ENCODE measurements at regions of chr9 and their contacts with region 1.

Region 1: DNA sequence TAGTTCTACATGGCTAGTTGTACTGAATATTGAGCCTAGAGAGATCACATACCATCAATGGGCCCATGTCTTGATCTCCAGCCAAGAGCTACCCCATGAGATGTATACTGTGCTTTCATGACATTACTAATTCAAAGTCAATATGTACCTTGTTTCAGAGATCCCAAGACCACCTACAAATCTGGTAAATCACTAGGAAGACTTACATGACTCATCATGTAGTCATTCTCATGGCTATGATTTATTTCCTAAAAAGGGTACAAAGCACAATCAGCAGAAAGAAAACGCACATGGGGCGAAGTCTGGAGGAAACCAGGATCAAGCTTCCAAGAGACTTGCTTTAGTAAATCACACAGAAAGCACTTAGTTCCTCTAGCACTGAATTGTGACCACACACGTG is 103.0 kb downstream of the PCSK5 start:
- DNase-seq: no peak
- H3K4me3 ChIP-seq: no peak overlapping the region
- H3K27ac ChIP-seq: no peak overlapping the region
- H3K4me1 ChIP-seq: peaks cover 0 to 7% of the 10 kb centered on the region in 2 donors
- H3K27me3 ChIP-seq: no peaks in the 10 kb centered on the region
- CTCF ChIP-seq: no peak
- POLR2A ChIP-seq: no peak

Region 2: GRCh38 chr9:75890472-75891276 is 102.8 kb before region 1 on chr9 and contains the start of gene PCSK5:
- intact Hi-C with region 1: loop called in 1 of 2 experiments (anchors 10 kb)
- DNase-seq: peak; percentile 93 to 97 (median 94)
- H3K4me3 ChIP-seq: peak within 1 kb of the TSS; percentile 12 to 81 (median 54)
- H3K27ac ChIP-seq: peak within 1 kb of the TSS; percentile 70 to 92 (median 81)
- H3K4me1 ChIP-seq: peaks cover 8 to 19% of the 10 kb centered on the region in 2 donors
- H3K27me3 ChIP-seq: no peaks in the 10 kb centered on the region
- CTCF ChIP-seq: peak in 4 of 6 experiments; percentile 22 to 34 (median 30)
- POLR2A ChIP-seq: peak; percentile 85 to 92
- total RNA-seq, gene PCSK5: 4.8 to 31.8 (median 9.2) TPM

Region 3: GRCh38 chr9:75921391-75922127 is 71.9 kb before region 1 on chr9:
- intact Hi-C with region 1: loop called in 1 of 2 experiments (anchors 10 kb)
- DNase-seq: no peak
- H3K4me3 ChIP-seq: no peak overlapping the region
- H3K27ac ChIP-seq: no peak overlapping the region
- H3K4me1 ChIP-seq: no peaks in the 10 kb centered on the region
- H3K27me3 ChIP-seq: no peaks in the 10 kb centered on the region
- CTCF ChIP-seq: no peak
- POLR2A ChIP-seq: no peak

Region 4: DNA sequence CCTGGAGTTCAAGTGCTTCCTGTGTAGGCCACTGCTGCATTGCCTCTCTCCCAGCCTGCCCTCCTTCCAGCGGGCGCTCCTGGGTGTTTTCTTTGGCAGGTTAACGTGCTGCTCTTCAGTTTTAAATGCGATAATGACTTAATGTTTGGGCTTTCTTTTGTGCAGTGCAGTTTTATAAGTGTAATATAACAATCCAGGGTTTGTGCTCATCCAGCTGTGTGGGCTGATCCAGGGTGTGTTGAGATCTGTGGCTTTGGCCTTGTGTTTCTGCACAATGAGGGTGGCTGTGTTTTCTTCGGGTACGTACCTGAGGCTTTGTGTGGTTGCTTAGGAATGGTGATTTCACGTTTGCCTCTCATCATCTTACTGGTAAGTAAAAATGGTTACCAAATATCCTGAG is 52.4 kb before region 1 on chr9:
- intact Hi-C with region 1: loop called in 1 of 2 experiments (anchors 10 kb)
- DNase-seq: no peak
- H3K4me3 ChIP-seq: no peak overlapping the region
- H3K27ac ChIP-seq: no peak overlapping the region
- H3K4me1 ChIP-seq: no peaks in the 10 kb centered on the region
- H3K27me3 ChIP-seq: no peaks in the 10 kb centered on the region
- CTCF ChIP-seq: no peak
- POLR2A ChIP-seq: no peak

Region 5: DNA sequence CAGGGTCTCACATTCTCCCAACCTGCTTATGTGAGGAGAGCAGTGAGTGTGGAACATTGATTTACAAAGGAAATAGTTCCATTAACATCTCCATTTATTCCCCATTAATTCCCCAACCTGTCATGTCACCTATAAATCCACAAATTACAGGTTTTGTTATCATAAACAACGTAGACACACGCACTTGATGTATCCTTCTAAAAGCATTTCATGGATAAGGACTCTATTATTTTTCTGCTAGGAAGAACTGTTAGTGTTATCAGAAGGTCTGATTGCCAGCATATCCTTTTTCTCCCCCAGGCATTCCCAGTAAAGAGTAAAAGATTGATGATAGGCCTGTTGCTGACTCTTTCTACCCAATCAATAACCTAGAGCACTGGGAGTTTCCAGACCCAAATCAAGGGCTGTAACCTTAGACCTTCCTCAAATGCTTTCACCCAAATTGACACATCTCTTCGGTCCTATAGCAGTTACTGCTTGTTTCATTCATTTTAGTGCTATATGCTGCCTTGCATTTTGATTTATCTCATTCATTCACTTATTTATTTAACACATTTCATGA is 340.0 kb after region 1 on chr9:
- intact Hi-C with region 1: no loop called
- DNase-seq: no peak
- H3K4me3 ChIP-seq: no peak overlapping the region
- H3K27ac ChIP-seq: no peak overlapping the region
- H3K4me1 ChIP-seq: no peaks in the 10 kb centered on the region
- H3K27me3 ChIP-seq: no peaks in the 10 kb centered on the region
- CTCF ChIP-seq: no peak
- POLR2A ChIP-seq: no peak

Region 6: GRCh38 chr9:76516350-76516749 is 522.9 kb after region 1 on chr9:
- intact Hi-C with region 1: no loop called
- DNase-seq: peak in 3 of 7 donors; percentile 8 to 60 (median 19)
- H3K4me3 ChIP-seq: no peak overlapping the region
- H3K27ac ChIP-seq: no peak overlapping the region
- H3K4me1 ChIP-seq: no peaks in the 10 kb centered on the region
- H3K27me3 ChIP-seq: no peaks in the 10 kb centered on the region
- CTCF ChIP-seq: no peak
- POLR2A ChIP-seq: no peak

Measured in adrenal gland (tissue), 19 donors.